ENCODE measurements at regions of chr5 and their contacts with region 1.

Region 1: GRCh38 chr5:39209924-39210323 is 9.4 kb downstream of the FYB1 start:
- DNase-seq: peak; percentile 70 to 91 (median 81)
- ATAC-seq: peak; percentile 82 to 86 (median 84)
- H3K4me3 ChIP-seq: peak overlapping the region; percentile 29 to 64
- H3K4me3 Mint-ChIP-seq: peak overlapping the region; percentile 65 to 71 (median 70)
- H3K27ac ChIP-seq: peak overlapping the region; percentile 87
- H3K27ac Mint-ChIP-seq: peak overlapping the region; percentile 96 to 98
- H3K4me1 ChIP-seq: peaks cover 69 to 88% of the 10 kb centered on the region in 2 experiments
- H3K4me1 Mint-ChIP-seq: peaks cover 97 to 100% (median 98%) of the 10 kb centered on the region in 3 donors
- H3K27me3 ChIP-seq: no peaks in the 10 kb centered on the region
- H3K27me3 Mint-ChIP-seq: no peaks in the 10 kb centered on the region

Region 2: DNA sequence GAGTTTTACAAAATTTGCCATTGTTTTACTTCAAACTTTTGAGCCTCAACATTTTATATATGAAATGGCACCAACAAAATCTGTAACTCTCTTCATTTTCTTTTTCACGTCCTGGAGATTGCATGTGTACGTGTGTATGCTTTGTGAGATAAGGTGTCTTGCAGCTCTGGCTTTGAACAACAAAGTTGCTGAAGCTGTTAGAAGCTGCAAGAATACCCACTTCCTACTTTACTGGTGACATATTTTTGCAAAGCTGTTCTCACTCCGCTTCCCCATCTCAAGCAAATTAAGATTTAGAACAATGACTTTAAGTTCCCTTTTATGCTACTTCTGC is 32.3 kb before region 1 on chr5:
- CTCF ChIA-PET with region 1: interaction called, 15 to 17 read pairs
- POLR2A ChIA-PET with region 1: interaction called in 1 of 2 experiments, 4 read pairs
- DNase-seq: peak in 13 of 35 experiments; percentile 38 to 80 (median 51)
- ATAC-seq: peak; percentile 73 to 78 (median 76)
- H3K4me3 ChIP-seq: peak overlapping the region in 1 of 2 donors; percentile 17
- H3K4me3 Mint-ChIP-seq: peak overlapping the region; percentile 56 to 70 (median 67)
- H3K27ac ChIP-seq: peak overlapping the region; percentile 72
- H3K27ac Mint-ChIP-seq: peak overlapping the region; percentile 97 to 98
- H3K4me1 ChIP-seq: peaks cover 58 to 84% of the 10 kb centered on the region in 2 experiments
- H3K4me1 Mint-ChIP-seq: peaks cover 98 to 100% (median 98%) of the 10 kb centered on the region in 3 donors
- H3K27me3 ChIP-seq: no peaks in the 10 kb centered on the region
- H3K27me3 Mint-ChIP-seq: no peaks in the 10 kb centered on the region

Region 3: DNA sequence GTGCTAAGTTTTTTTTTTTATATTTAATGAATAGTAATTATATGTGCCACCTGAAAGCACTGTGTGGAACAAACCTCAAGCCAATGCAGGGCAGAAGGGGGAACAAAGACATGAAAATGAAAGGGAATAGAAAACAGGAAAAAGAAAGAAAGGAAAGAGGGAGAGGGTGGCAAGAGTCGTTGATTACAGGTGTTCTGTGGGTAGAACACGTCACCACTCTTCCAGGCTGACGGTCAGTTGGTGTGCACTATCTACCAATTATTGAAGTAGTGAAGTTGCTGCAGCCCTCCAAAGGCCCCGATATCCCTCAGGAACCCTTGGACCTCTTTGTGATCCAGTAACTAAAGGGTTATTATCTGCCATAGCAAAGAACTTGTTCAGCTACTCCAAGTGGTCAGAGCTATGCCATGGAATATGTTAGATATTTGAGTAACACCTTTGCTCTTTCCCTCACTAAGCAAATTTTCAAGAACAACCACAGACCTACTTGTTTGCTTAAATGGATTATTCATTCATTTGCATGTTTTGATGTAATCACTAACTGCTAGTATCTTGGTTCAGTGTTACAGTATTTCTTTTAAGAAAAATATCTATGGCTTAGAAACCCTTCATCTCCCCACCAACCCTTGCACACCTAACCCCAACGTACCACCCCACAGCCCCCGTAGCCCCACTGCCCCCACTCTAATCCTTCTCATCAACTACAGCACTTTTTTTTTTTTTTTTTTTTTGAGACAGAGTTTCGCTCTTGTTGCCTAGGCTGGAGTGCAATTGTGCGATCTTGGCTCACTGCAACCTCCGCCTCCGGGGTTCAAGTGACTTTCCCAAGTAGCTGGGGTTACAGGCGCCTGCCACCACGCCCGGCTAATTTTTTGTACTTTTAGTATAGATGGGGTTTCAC is 21.8 kb before region 1 on chr5:
- CTCF ChIA-PET with region 1: interaction called, 3 to 12 read pairs
- POLR2A ChIA-PET with region 1: interaction called, 5 to 10 read pairs
- DNase-seq: peak in 8 of 35 experiments; percentile 29 to 68 (median 41)
- ATAC-seq: peak; percentile 19 to 36 (median 28)
- H3K4me3 ChIP-seq: peak overlapping the region; percentile 26 to 46
- H3K4me3 Mint-ChIP-seq: peak overlapping the region; percentile 79 to 95 (median 84)
- H3K27ac ChIP-seq: peak overlapping the region; percentile 72
- H3K27ac Mint-ChIP-seq: peak overlapping the region; percentile 96 to 100
- H3K4me1 ChIP-seq: peaks cover 57 to 77% of the 10 kb centered on the region in 2 experiments
- H3K4me1 Mint-ChIP-seq: peaks cover 91 to 95% (median 91%) of the 10 kb centered on the region in 3 donors
- H3K27me3 ChIP-seq: no peaks in the 10 kb centered on the region
- H3K27me3 Mint-ChIP-seq: no peaks in the 10 kb centered on the region

Region 4: GRCh38 chr5:39194466-39195136 is 15.3 kb before region 1 on chr5:
- CTCF ChIA-PET with region 1: interaction called, 3 to 12 read pairs
- POLR2A ChIA-PET with region 1: interaction called in 1 of 2 experiments, 7 read pairs
- DNase-seq: no peak
- ATAC-seq: no peak
- H3K4me3 ChIP-seq: peak overlapping the region; percentile 74 to 78
- H3K4me3 Mint-ChIP-seq: peak overlapping the region; percentile 74 to 95 (median 74)
- H3K27ac ChIP-seq: peak overlapping the region; percentile 72
- H3K27ac Mint-ChIP-seq: peak overlapping the region; percentile 94 to 98
- H3K4me1 ChIP-seq: peaks cover 48 to 65% of the 10 kb centered on the region in 2 experiments
- H3K4me1 Mint-ChIP-seq: peaks cover 72 to 76% (median 75%) of the 10 kb centered on the region in 3 donors
- H3K27me3 ChIP-seq: no peaks in the 10 kb centered on the region
- H3K27me3 Mint-ChIP-seq: no peaks in the 10 kb centered on the region

Measured in T-cell (primary cell).